Activated B cell treated with CpG ODN at 0.5 μM for 24 hours (primary cell): ENCODE measurements at regions of chr9 and their contacts with region 1.

Region 1: DNA sequence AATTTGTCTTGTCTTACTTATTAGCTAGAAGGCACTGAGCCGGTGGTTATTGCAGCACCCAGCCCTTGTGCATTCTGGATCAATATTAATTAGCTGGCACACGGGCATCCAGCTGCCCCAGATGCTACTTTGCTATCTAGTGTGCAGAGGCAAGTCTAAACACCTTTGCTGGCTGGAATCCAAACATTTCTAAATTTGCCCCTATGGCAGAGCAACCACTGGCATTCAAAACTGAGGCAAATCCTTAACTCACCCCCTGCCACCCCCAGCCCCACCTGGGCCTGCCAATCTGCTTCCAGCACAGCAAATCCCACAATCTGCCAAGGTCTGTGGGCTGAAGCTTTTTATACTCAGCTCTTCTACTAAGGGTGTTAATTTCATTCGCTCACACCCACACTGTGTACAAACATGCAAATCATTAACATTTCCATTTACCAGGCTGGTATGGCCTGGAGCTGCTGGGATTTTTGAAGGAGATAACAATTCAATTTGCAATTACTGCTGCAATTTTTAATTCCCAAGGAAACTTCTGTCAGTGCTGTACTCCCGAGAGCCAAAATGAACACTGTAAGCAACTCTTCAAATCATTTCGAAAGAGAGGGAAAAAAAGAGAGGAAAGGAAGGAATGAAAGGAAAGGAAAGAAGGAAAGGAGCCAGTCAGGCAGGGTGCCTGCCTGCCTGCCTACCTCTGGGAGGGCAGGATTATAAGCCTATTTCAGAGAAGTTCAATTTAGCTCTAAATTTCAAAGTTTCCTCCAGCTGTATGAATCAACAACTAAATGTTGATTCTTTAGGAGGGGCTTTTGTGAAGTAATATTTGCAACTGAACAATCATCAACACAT is 35.5 kb downstream of the RAPGEF1 start:
- DNase-seq: no peak
- ATAC-seq: no peak
- H3K4me3 Mint-ChIP-seq: peak overlapping the region; percentile 47
- H3K27ac Mint-ChIP-seq: peak overlapping the region; percentile 32
- H3K4me1 Mint-ChIP-seq: peaks cover 98% of the 10 kb centered on the region
- H3K27me3 Mint-ChIP-seq: no peaks in the 10 kb centered on the region
- CTCF ChIP-seq: no peak

Region 2: GRCh38 chr9:131690950-131691573 is 13.3 kb before region 1 on chr9:
- CTCF ChIA-PET with region 1: interaction called, 5 read pairs
- POLR2A ChIA-PET with region 1: interaction called, 15 read pairs
- intact Hi-C with region 1: loop called (anchors 2 kb)
- DNase-seq: no peak
- ATAC-seq: no peak
- H3K4me3 Mint-ChIP-seq: peak overlapping the region; percentile 2
- H3K27ac Mint-ChIP-seq: peak overlapping the region; percentile 65
- H3K4me1 Mint-ChIP-seq: peaks cover 93% of the 10 kb centered on the region
- H3K27me3 Mint-ChIP-seq: no peaks in the 10 kb centered on the region
- CTCF ChIP-seq: no peak